ENCODE measurements at regions of chr1 and their contacts with region 1.

Region 1: GRCh38 chr1:44049839-44050238 is 18.6 kb upstream of the SLC6A9 start:
- DNase-seq: no peak
- H3K4me3 Mint-ChIP-seq: no peak overlapping the region
- H3K27ac Mint-ChIP-seq: no peak overlapping the region
- H3K4me1 Mint-ChIP-seq: peaks cover 18% of the 10 kb centered on the region
- H3K27me3 Mint-ChIP-seq: peaks cover 3% of the 10 kb centered on the region

Region 2: DNA sequence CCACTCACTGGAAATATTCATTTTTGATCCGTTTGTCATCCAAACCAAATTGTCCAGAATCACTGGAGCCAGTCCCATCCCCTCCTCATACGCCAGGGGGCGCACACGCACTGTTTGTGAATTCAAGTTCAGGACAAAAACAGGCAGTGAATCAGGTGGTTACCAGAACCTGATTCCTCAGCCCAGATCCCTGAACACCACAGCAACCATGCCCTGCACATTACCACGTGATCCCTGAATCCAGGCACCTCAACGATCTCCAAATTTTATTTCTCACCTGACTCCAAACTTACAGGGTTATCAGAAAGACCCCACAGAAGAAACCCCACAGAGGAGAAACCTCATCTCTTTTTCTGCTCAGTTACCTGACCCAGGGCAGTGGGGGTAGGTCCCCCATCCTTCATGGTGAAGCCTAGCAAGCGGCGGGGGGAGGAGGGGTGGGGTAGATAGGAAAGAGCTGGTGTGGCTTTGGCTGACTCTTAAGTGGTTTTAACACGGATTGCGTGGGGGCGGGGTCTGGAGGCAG is 520.6 kb before region 1 on chr1:
- CTCF ChIA-PET with region 1: interaction called, 11 read pairs
- POLR2A ChIA-PET with region 1: no interaction called
- intact Hi-C with region 1: loop called (anchors 5 kb)
- DNase-seq: peak; percentile 87
- H3K4me3 Mint-ChIP-seq: no peak overlapping the region
- H3K27ac Mint-ChIP-seq: no peak overlapping the region
- H3K4me1 Mint-ChIP-seq: peaks cover 16% of the 10 kb centered on the region
- H3K27me3 Mint-ChIP-seq: peaks cover 37% of the 10 kb centered on the region

Region 3: DNA sequence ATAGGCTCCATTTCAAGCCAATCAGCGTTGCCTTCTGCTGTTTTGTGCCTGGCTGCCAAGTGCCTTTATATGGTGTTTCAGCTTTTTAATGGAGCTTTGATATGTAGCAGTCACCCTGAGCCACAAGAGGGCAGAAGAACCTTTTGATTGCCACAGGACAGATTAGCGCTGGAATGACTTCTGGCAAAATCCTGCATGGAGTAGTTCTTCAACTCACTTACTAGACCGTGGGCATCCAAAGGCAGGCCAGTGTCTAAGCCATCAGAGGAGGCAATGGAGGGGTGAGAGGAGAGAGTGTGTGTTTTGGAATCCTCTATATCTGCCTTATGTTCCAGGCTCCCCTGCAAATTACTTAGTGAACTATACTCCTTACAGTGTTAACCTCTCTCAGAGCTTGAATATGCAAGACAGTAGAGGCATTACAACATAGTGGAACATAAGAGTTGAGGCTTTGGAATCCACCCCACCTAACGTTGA is 286.3 kb before region 1 on chr1:
- CTCF ChIA-PET with region 1: interaction called, 16 read pairs
- POLR2A ChIA-PET with region 1: no interaction called
- intact Hi-C with region 1: loop called (anchors 2 kb)
- DNase-seq: peak; percentile 53
- H3K4me3 Mint-ChIP-seq: no peak overlapping the region
- H3K27ac Mint-ChIP-seq: no peak overlapping the region
- H3K4me1 Mint-ChIP-seq: no peaks in the 10 kb centered on the region
- H3K27me3 Mint-ChIP-seq: no peaks in the 10 kb centered on the region

Region 4: DNA sequence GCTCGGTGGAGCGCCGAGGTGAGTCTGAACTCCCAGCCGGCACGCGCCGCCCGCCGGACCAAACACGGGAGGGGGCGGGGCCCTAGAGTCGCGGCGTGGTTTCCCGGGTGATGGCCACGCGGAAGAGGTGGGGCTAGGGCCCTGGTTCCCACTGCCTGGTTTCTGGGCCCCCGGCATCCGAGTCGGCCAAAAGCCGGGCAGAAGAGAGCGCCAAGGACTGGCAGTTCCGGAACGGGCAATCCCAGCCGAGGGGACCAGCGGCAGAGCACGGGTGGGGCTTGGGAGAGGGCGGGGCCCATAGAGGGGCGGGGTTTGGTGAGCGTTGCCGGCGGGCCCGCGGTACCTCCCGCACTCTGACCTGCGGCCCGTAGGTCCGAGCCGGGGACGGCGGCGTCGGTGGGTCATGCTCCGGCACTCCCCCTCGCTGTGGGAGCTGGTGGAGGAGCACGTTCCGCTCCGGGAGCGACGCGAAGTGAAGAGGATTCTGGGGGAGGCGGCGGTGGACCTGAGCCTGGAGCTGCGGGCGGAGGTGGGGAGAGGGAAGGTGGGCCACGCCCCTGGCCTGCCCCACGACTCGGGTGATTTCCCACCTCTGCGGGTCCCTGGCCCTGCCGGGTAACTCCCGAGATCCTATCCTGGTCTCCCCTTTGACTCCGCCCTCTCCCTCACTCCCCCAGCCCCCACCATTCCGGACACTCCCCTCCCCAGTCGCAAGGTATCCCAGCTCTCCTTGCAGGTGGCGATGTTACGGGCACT is 58.2 kb before region 1 on chr1 and contains the start of gene CCDC24:
- CTCF ChIA-PET with region 1: interaction called, 23 read pairs
- POLR2A ChIA-PET with region 1: no interaction called
- intact Hi-C with region 1: no loop called
- DNase-seq: peak; percentile 84
- H3K4me3 Mint-ChIP-seq: peak within 1 kb of the TSS; percentile 86
- H3K27ac Mint-ChIP-seq: peak within 1 kb of the TSS; percentile 56
- H3K4me1 Mint-ChIP-seq: peaks cover 11% of the 10 kb centered on the region
- H3K27me3 Mint-ChIP-seq: no peaks in the 10 kb centered on the region
- total RNA-seq, gene CCDC24: 2.7 to 2.8 TPM

Region 5: DNA sequence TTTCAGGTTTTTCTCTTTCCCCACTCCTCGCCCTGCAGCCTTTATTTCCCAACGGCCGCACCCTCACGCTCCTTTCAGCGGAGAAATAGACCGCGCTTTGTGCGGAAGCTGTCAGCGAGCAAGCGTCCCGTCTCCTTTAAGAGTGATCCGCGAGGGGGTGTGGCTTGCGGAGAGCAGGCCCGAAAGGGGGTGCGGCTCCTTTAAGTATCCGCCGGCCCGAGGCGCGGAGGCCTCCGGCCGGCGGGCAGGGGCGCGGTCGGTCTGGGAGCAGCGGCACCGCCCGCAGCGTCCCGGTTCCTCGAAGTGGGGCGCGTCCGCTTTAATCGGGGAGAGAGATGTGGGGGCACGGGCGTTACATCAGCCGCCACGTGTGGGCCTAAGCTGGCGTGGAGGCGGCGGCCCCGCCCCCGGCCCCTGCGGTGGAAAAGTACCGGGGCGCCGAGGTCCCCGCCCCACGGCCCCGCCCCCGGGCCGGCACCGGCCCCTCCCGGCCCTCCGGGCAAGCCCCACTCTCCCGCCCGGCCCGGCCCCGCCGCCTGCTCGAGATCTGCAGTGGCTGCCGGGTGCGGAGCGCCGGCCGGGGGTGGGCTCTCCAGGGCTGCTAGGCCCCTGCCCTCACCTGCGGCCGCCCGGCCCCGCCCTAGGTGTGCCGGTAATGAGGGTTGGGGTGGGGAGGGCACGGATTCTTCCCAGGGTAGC is 19.8 kb before region 1 on chr1:
- CTCF ChIA-PET with region 1: interaction called, 75 read pairs
- POLR2A ChIA-PET with region 1: interaction called, 3 read pairs
- intact Hi-C with region 1: loop called (anchors 2 kb)
- DNase-seq: peak; percentile 92
- H3K4me3 Mint-ChIP-seq: peak overlapping the region; percentile 94
- H3K27ac Mint-ChIP-seq: peak overlapping the region; percentile 95
- H3K4me1 Mint-ChIP-seq: peaks cover 13% of the 10 kb centered on the region
- H3K27me3 Mint-ChIP-seq: no peaks in the 10 kb centered on the region

Region 6: GRCh38 chr1:44068442-44068921 is 18.6 kb after region 1 on chr1:
- CTCF ChIA-PET with region 1: interaction called, 10 read pairs
- POLR2A ChIA-PET with region 1: no interaction called
- intact Hi-C with region 1: no loop called
- DNase-seq: no peak
- H3K4me3 Mint-ChIP-seq: no peak overlapping the region
- H3K27ac Mint-ChIP-seq: no peak overlapping the region
- H3K4me1 Mint-ChIP-seq: no peaks in the 10 kb centered on the region
- H3K27me3 Mint-ChIP-seq: peaks cover 24% of the 10 kb centered on the region

Region 7: DNA sequence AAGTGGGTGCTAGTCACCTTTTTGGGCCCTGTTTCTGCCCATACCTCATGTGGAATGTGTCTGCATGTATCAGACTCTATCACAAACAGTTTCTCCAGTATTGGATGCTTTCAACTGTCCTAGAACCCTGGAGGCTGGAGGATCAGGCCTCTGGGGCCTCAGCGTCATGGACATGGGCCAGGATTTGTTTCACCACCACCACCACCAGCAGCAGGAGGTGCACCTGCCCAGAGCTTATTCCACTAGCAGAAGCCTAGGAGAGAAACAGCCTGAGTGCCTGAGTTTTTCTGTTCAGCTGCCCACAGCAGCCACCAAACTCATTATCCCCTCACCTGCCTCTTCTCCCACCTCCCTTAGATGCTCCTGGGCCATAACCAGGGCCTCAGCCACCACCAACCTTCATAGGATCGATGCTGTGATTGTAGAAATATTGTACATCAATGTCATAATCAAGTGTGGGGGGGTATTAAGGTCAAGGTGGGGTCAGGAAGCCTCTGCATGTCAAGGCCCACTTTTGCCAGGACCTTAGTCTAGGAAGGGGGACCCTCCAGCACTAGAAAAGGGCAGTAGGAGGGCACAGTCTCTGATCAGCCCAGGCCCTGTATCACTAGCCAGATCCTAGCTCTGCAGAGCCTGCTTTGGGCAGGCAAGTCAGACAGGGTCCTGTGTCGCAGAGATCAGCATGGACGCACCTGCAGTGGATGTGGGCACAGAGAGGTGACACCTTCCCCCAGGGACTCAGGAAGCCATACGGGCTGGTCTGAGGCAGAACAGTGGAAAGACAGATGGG is 172.8 kb after region 1 on chr1:
- CTCF ChIA-PET with region 1: no interaction called
- POLR2A ChIA-PET with region 1: no interaction called
- intact Hi-C with region 1: no loop called
- DNase-seq: no peak
- H3K4me3 Mint-ChIP-seq: no peak overlapping the region
- H3K27ac Mint-ChIP-seq: no peak overlapping the region
- H3K4me1 Mint-ChIP-seq: peaks cover 4% of the 10 kb centered on the region
- H3K27me3 Mint-ChIP-seq: no peaks in the 10 kb centered on the region

Measured in activated CD4-positive, alpha-beta memory T cell treated with anti-CD3 and anti-CD28 coated beads for 36 hours (primary cell).